Sciatic nerve (tissue), 2 donors: ENCODE measurements at regions of chr4 and their contacts with region 1.

Region 1: GRCh38 chr4:158682066-158682465 is 10.0 kb downstream of the ETFDH start:
- DNase-seq: no peak
- ATAC-seq: peak; percentile 72

Region 2: GRCh38 chr4:157514711-157515110 is 1167.4 kb before region 1 on chr4:
- intact Hi-C with region 1: no loop called
- DNase-seq: no peak
- ATAC-seq: no peak

Region 3: GRCh38 chr4:157576671-157577217 is 1105.3 kb before region 1 on chr4:
- intact Hi-C with region 1: loop called (anchors 5 kb)
- DNase-seq: no peak
- ATAC-seq: no peak